Heart left ventricle (tissue), 16 donors: ENCODE measurements at regions of chr11 and their contacts with region 1.

Region 1: DNA sequence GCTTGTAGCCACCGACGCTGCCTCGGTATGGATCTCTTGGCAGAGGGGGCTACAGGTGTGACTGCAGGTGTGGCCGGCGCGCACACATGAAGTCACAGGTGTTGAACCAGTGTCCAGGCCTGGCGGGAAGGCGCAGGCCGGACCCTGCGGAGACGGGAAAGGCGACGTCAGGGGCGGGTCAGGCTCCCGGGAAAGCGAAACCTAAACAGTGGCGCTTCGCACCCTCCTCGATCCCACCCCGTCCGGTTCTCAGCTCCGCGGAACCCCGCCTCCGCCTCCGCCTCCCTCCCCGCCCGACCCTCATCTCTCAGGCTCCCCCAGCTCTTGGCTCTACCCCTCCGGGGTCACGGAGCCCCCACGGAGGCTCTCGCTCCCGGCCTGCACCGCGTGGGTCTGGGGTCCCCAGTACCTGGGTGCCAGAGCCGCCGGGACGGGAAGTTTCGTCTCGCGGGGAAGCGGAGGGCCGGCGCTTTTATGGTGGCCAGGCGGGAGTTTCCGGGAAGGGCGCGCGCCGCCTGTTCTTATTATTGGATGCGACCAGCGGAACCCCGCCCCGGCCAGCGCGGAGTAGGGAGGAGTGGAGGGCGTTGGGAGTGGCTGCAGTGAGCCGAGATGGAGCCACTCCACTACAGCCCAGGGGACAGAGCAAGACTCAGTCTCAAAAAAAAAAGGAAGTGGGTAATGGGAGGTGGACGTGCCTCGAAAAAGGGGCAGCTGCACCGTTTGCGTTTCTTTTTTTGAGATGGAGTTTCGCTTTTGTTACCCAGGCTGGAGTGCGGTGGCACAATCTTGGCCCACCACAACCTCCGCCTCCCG is at the start of gene IRF7:
- DNase-seq: peak; percentile 96 to 98 (median 97)
- ATAC-seq: peak; percentile 86 to 94 (median 92)
- H3K4me3 ChIP-seq: peak within 1 kb of the TSS; percentile 25 to 90 (median 70)
- H3K27ac ChIP-seq: peak within 1 kb of the TSS; percentile 76 to 99 (median 92)
- H3K4me1 ChIP-seq: peaks cover 8 to 38% (median 22%) of the 10 kb centered on the region in 12 donors
- H3K27me3 ChIP-seq: no peaks in the 10 kb centered on the region
- CTCF ChIP-seq: no peak
- POLR2A ChIP-seq: peak in 1 of 2 donors; percentile 93
- total RNA-seq, gene IRF7: 5.5 to 30.6 (median 14.9) TPM

Region 2: GRCh38 chr11:568306-569157 is 47.2 kb before region 1 on chr11:
- intact Hi-C with region 1: loop called in 1 of 10 experiments (anchors 2 kb)
- DNase-seq: peak; percentile 93 to 97 (median 95)
- ATAC-seq: peak; percentile 89 to 94 (median 92)
- H3K4me3 ChIP-seq: peak overlapping the region; percentile 64 to 90 (median 76)
- H3K27ac ChIP-seq: peak overlapping the region; percentile 87 to 100 (median 98)
- H3K4me1 ChIP-seq: peaks cover 0 to 31% (median 16%) of the 10 kb centered on the region in 12 donors
- H3K27me3 ChIP-seq: no peaks in the 10 kb centered on the region
- CTCF ChIP-seq: no peak
- POLR2A ChIP-seq: peak; percentile 58 to 65

Region 3: GRCh38 chr11:575996-576768 is 39.5 kb before region 1 on chr11 and contains the start of gene PHRF1:
- intact Hi-C with region 1: loop called in 2 of 10 experiments (anchors 5 kb)
- DNase-seq: peak; percentile 97 to 98 (median 97)
- ATAC-seq: peak; percentile 91 to 99 (median 94)
- H3K4me3 ChIP-seq: peak within 1 kb of the TSS; percentile 74 to 99 (median 84)
- H3K27ac ChIP-seq: peak within 1 kb of the TSS; percentile 88 to 98 (median 96)
- H3K4me1 ChIP-seq: peaks cover 20 to 57% (median 50%) of the 10 kb centered on the region in 12 donors
- H3K27me3 ChIP-seq: peaks cover 0 to 6% (median 0%) of the 10 kb centered on the region in 9 donors
- CTCF ChIP-seq: no peak
- POLR2A ChIP-seq: peak in 1 of 2 donors; percentile 70
- total RNA-seq, gene PHRF1: 11.6 to 21.3 (median 18.3) TPM

Region 4: GRCh38 chr11:695538-696248 is 80.0 kb after region 1 on chr11 and contains the start of gene TMEM80:
- intact Hi-C with region 1: loop called in 1 of 10 experiments (anchors 5 kb)
- DNase-seq: peak; percentile 99 to 100 (median 100)
- ATAC-seq: peak; percentile 87 to 93 (median 90)
- H3K4me3 ChIP-seq: peak within 1 kb of the TSS; percentile 61 to 99 (median 94)
- H3K27ac ChIP-seq: peak within 1 kb of the TSS; percentile 98 to 100 (median 100)
- H3K4me1 ChIP-seq: peaks cover 8 to 45% (median 32%) of the 10 kb centered on the region in 12 donors
- H3K27me3 ChIP-seq: no peaks in the 10 kb centered on the region
- CTCF ChIP-seq: no peak
- POLR2A ChIP-seq: peak in 1 of 2 donors; percentile 76
- total RNA-seq, gene TMEM80: 8.9 to 18.2 (median 15.0) TPM